ENCODE measurements at regions of chr4 and their contacts with region 1.

Region 1: GRCh38 chr4:47122592-47123291 is 91.4 kb downstream of the GABRB1 start:
- DNase-seq: peak; percentile 58
- H3K4me3 Mint-ChIP-seq: no peak overlapping the region
- H3K27ac Mint-ChIP-seq: no peak overlapping the region
- H3K4me1 Mint-ChIP-seq: no peaks in the 10 kb centered on the region
- H3K27me3 Mint-ChIP-seq: peaks cover 6% of the 10 kb centered on the region

Region 2: DNA sequence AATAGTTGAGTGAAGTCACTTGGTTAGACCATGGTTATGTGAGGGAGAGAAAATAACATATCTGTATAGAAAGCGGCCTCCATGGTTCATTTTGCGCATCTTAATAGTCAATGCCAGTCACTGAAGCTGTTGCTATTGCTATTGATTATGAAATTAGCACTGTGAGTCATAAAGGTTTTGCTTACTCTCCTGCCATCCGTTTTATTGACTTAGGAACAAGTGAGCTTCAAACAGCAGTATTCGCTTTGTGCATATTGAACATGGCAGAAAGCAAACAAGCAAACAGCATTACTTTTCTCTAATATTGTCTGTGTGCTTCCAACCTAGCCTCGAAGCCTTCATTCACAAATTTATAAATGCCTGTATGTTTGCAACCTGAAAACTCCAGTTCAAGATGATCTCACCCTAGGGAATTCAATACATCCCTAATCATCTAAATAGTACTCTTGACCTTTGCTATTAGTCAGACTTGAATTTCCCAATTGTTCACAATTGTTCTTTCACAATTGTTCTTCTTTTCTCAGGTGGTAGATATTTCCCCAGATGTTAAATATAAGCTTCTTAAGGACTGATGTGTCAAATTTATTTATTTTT is 676.9 kb before region 1 on chr4:
- CTCF ChIA-PET with region 1: no interaction called
- POLR2A ChIA-PET with region 1: no interaction called
- intact Hi-C with region 1: no loop called
- DNase-seq: no peak
- H3K4me3 Mint-ChIP-seq: no peak overlapping the region
- H3K27ac Mint-ChIP-seq: no peak overlapping the region
- H3K4me1 Mint-ChIP-seq: no peaks in the 10 kb centered on the region
- H3K27me3 Mint-ChIP-seq: no peaks in the 10 kb centered on the region

Region 3: DNA sequence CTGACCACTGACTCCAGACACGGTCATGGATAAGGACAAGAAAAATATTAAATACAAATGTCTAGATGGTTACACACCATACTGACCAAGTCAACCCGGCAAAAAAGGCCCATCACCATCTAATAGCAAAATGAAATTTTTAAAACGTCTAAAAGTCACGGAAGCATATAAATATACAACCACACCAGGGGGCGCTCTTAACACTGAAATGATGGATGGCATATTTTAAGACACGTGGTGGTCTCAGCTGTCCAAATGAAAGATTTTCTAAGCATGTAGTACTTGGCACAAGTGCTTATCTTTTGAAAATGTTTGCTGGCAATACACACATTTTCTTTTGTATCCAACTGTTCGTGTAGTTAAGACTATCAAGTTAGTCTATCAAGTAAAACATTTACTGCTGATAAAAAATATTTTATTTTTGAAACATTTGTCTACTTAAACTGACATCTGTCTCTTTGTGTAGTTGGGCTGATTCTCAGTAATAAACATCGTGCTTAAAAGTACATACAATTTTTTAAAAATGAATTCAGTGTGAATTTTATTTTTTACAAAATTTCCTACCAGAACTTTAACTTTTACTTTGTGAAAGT is 278.3 kb before region 1 on chr4:
- CTCF ChIA-PET with region 1: interaction called, 31 read pairs
- POLR2A ChIA-PET with region 1: no interaction called
- intact Hi-C with region 1: no loop called
- DNase-seq: peak; percentile 37
- H3K4me3 Mint-ChIP-seq: no peak overlapping the region
- H3K27ac Mint-ChIP-seq: no peak overlapping the region
- H3K4me1 Mint-ChIP-seq: no peaks in the 10 kb centered on the region
- H3K27me3 Mint-ChIP-seq: no peaks in the 10 kb centered on the region

Region 4: GRCh38 chr4:46931981-46932380 is 190.8 kb before region 1 on chr4:
- CTCF ChIA-PET with region 1: interaction called, 14 read pairs
- POLR2A ChIA-PET with region 1: no interaction called
- intact Hi-C with region 1: loop called (anchors 5 kb)
- DNase-seq: peak; percentile 25
- H3K4me3 Mint-ChIP-seq: no peak overlapping the region
- H3K27ac Mint-ChIP-seq: no peak overlapping the region
- H3K4me1 Mint-ChIP-seq: no peaks in the 10 kb centered on the region
- H3K27me3 Mint-ChIP-seq: peaks cover 3% of the 10 kb centered on the region

Region 5: GRCh38 chr4:47109379-47109778 is 13.4 kb before region 1 on chr4:
- CTCF ChIA-PET with region 1: interaction called, 11 read pairs
- POLR2A ChIA-PET with region 1: no interaction called
- intact Hi-C with region 1: no loop called
- DNase-seq: no peak
- H3K4me3 Mint-ChIP-seq: no peak overlapping the region
- H3K27ac Mint-ChIP-seq: no peak overlapping the region
- H3K4me1 Mint-ChIP-seq: no peaks in the 10 kb centered on the region
- H3K27me3 Mint-ChIP-seq: peaks cover 7% of the 10 kb centered on the region

Region 6: GRCh38 chr4:47383829-47384427 is 261.2 kb after region 1 on chr4:
- CTCF ChIA-PET with region 1: interaction called, 5 read pairs
- POLR2A ChIA-PET with region 1: no interaction called
- intact Hi-C with region 1: loop called (anchors 1 kb)
- DNase-seq: no peak
- H3K4me3 Mint-ChIP-seq: no peak overlapping the region
- H3K27ac Mint-ChIP-seq: no peak overlapping the region
- H3K4me1 Mint-ChIP-seq: no peaks in the 10 kb centered on the region
- H3K27me3 Mint-ChIP-seq: peaks cover 4% of the 10 kb centered on the region